CD4-positive, alpha-beta memory T cell (primary cell): ENCODE measurements at regions of chr16 and their contacts with region 1.

Region 1: GRCh38 chr16:90022209-90023064 is 3.2 kb upstream of the DBNDD1 start:
- DNase-seq: peak; percentile 63 to 78 (median 73)
- H3K4me3 ChIP-seq: peak overlapping the region in 1 of 2 donors; percentile 69
- H3K4me3 Mint-ChIP-seq: peak overlapping the region; percentile 73 to 86 (median 80)
- H3K27ac ChIP-seq: peak overlapping the region; percentile 51
- H3K27ac Mint-ChIP-seq: peak overlapping the region; percentile 61 to 93 (median 79)
- H3K4me1 ChIP-seq: peaks cover 40% of the 10 kb centered on the region
- H3K4me1 Mint-ChIP-seq: peaks cover 14 to 33% (median 23%) of the 10 kb centered on the region in 4 donors
- H3K27me3 ChIP-seq: no peaks in the 10 kb centered on the region
- H3K27me3 Mint-ChIP-seq: no peaks in the 10 kb centered on the region

Region 2: DNA sequence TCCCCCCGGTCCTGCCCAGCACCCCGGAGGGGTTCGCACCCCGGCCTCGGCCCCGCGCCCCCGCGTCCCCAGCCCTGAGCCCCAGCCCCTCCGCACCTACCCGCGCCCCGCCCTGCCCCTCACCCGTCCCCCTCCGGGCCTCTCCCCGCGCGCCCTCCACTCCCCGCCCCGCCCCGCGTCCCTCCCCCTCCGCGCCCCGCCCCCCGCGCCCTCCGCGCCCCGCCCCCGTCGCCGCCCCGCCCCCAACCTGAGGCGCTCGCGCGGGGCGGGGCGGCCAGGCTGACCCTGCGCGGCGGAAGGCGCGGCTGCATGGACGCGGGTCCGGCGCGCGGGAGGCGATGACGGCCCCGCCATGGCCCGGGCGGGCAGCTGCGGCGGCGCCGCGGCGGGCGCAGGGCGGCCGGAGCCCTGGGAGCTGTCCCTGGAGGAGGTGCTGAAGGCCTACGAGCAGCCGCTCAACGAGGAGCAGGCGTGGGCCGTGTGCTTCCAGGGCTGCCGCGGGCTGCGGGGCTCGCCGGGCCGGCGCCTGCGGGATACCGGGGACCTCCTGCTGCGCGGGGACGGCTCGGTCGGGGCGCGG is 194.1 kb before region 1 on chr16 and contains the start of gene SPIRE2:
- CTCF ChIA-PET with region 1: no interaction called
- POLR2A ChIA-PET with region 1: no interaction called
- intact Hi-C with region 1: no loop called
- DNase-seq: peak; percentile 71 to 77 (median 75)
- H3K4me3 ChIP-seq: no peak within 1 kb of the TSS
- H3K4me3 Mint-ChIP-seq: peak within 1 kb of the TSS; percentile 36 to 75 (median 60)
- H3K27ac ChIP-seq: no peak within 1 kb of the TSS
- H3K27ac Mint-ChIP-seq: peak within 1 kb of the TSS in 3 of 7 donors; percentile 30 to 79 (median 52)
- H3K4me1 ChIP-seq: peaks cover 8% of the 10 kb centered on the region
- H3K4me1 Mint-ChIP-seq: peaks cover 2 to 13% (median 6%) of the 10 kb centered on the region in 4 donors
- H3K27me3 ChIP-seq: peaks cover 15% of the 10 kb centered on the region
- H3K27me3 Mint-ChIP-seq: peaks cover 14 to 17% of the 10 kb centered on the region in 2 donors
- total RNA-seq, gene SPIRE2: 3.0 to 3.3 TPM

Region 3: GRCh38 chr16:89958068-89958467 is 64.4 kb before region 1 on chr16:
- CTCF ChIA-PET with region 1: no interaction called
- POLR2A ChIA-PET with region 1: no interaction called
- intact Hi-C with region 1: no loop called
- DNase-seq: no peak
- H3K4me3 ChIP-seq: no peak overlapping the region
- H3K4me3 Mint-ChIP-seq: no peak overlapping the region
- H3K27ac ChIP-seq: no peak overlapping the region
- H3K27ac Mint-ChIP-seq: no peak overlapping the region
- H3K4me1 ChIP-seq: no peaks in the 10 kb centered on the region
- H3K4me1 Mint-ChIP-seq: peaks cover 0 to 1% (median 0%) of the 10 kb centered on the region in 4 donors
- H3K27me3 ChIP-seq: no peaks in the 10 kb centered on the region
- H3K27me3 Mint-ChIP-seq: no peaks in the 10 kb centered on the region

Region 4: GRCh38 chr16:90008708-90009535 is 13.5 kb before region 1 on chr16:
- CTCF ChIA-PET with region 1: interaction called, 4 read pairs
- POLR2A ChIA-PET with region 1: interaction called, 4 read pairs
- intact Hi-C with region 1: loop called (anchors 1 kb)
- DNase-seq: peak; percentile 52 to 67 (median 59)
- H3K4me3 ChIP-seq: peak overlapping the region; percentile 30 to 49
- H3K4me3 Mint-ChIP-seq: peak overlapping the region; percentile 76 to 87 (median 81)
- H3K27ac ChIP-seq: no peak overlapping the region
- H3K27ac Mint-ChIP-seq: peak overlapping the region in 6 of 7 donors; percentile 46 to 84 (median 76)
- H3K4me1 ChIP-seq: peaks cover 18% of the 10 kb centered on the region
- H3K4me1 Mint-ChIP-seq: peaks cover 10 to 16% (median 14%) of the 10 kb centered on the region in 4 donors
- H3K27me3 ChIP-seq: no peaks in the 10 kb centered on the region
- H3K27me3 Mint-ChIP-seq: no peaks in the 10 kb centered on the region